Activated naive CD8-positive, alpha-beta T cell treated with anti-CD3 and anti-CD28 coated beads, Interleukin-2, amount 10 ng/mL, durations not matched to agents 7 days and 5 days (primary cell): ENCODE measurements at regions of chr15 and their contacts with region 1.

Region 1: GRCh38 chr15:90829942-90830440 is 38.4 kb upstream of the FURIN start:
- DNase-seq: peak; percentile 64
- ATAC-seq: peak; percentile 83
- H3K4me3 Mint-ChIP-seq: peak overlapping the region; percentile 73
- H3K27ac Mint-ChIP-seq: peak overlapping the region; percentile 92
- H3K4me1 Mint-ChIP-seq: peaks cover 35% of the 10 kb centered on the region
- H3K27me3 Mint-ChIP-seq: no peaks in the 10 kb centered on the region

Region 2: GRCh38 chr15:90818251-90819210 is 11.5 kb before region 1 on chr15:
- POLR2A ChIA-PET with region 1: interaction called, 22 read pairs
- DNase-seq: peak; percentile 53
- ATAC-seq: peak; percentile 35
- H3K4me3 Mint-ChIP-seq: peak overlapping the region; percentile 52
- H3K27ac Mint-ChIP-seq: peak overlapping the region; percentile 83
- H3K4me1 Mint-ChIP-seq: peaks cover 53% of the 10 kb centered on the region
- H3K27me3 Mint-ChIP-seq: no peaks in the 10 kb centered on the region

Region 3: DNA sequence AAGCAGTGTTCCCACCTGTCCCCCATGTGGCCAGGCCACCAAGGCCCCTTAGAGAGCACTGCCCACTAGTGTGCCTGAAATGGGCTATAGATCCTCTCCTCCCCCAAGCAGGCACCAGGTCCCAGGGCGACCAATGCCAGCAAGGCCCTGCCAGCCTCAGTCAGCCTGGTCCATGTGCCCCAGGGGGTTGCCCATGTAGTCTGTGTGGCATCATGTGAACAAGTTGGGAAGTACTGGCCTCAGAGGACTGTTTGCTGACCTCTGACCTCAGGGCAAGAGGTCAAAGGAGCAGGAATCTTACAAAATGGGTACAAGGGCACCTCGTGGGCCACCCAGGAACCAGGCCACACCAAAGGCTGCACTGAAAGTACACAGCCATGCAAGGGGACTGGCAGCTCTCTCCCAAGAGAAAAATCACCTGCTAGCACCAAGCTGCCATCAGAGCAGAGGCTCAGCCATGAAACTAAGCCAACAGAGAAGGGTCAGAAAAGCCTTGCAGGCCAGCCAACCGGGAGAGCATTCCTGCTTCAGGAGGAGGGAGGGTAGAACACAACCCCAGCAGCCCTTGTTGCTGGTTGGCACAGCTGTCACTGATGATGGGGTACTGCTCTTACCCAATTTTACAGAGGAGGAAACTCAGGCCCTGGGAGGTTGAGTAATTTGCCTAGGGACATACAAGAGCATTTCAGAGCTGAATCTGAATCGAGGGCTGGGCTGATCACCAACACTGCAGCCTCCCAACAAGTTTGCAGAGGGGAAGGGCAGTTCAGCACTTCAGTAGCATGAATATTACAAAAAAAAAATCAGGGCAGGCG is 33.2 kb after region 1 on chr15:
- POLR2A ChIA-PET with region 1: no interaction called
- DNase-seq: no peak
- ATAC-seq: no peak
- H3K4me3 Mint-ChIP-seq: no peak overlapping the region
- H3K27ac Mint-ChIP-seq: no peak overlapping the region
- H3K4me1 Mint-ChIP-seq: peaks cover 25% of the 10 kb centered on the region
- H3K27me3 Mint-ChIP-seq: no peaks in the 10 kb centered on the region